Esophagus squamous epithelium (tissue), 5 donors: ENCODE measurements at regions of chr10 and their contacts with region 1.

Region 1: DNA sequence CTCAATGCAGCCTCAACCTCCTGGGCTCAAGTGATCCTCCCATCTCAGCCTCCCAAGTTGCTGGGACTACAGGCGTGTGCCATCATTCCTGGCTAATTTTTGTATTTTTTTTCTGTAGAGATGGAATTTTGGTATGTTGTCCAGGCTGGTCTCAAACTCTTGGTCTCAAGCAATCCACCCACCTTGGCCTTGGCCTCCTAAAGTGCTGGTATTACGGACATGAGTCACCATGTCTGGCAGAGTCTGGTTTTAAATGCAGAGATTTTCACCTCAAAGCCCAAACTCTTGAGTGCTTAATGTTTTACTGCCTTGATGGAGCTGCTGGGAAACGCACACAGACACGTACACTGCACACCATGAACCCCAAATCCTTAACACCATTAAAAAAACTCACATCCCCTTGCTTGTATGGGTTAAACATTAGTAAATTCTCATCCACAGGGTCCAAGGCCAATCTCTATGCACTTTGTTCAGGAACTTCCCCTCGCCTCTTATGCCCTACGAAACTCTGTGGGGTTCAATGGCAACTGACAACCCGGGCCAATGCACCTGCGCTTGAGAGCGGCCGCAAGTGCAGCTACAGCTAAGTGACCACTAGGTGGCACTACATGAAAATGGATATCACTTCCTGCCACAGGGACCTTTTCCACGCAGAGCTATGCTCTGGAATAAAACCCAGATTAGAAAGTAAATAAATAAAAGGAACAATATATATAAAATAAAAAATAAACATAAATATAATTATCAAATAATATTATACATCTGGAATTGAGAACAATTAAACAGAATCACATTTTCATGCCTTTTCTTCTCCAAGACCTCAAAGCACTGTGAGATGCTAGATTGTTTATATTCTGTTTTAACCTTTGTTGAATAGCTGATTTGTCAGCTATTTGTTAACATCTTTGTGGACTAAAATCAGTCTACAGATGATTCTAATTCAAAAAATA is 66.9 kb upstream of the AFAP1L2 start:
- DNase-seq: no peak
- H3K4me3 ChIP-seq: no peak overlapping the region
- H3K27ac ChIP-seq: peak overlapping the region in 2 of 4 donors; percentile 34 to 58
- H3K4me1 ChIP-seq: peaks cover 0 to 27% (median 0%) of the 10 kb centered on the region in 3 donors
- H3K27me3 ChIP-seq: no peaks in the 10 kb centered on the region
- CTCF ChIP-seq: peak; percentile 82 to 93 (median 89)
- POLR2A ChIP-seq: no peak

Region 2: DNA sequence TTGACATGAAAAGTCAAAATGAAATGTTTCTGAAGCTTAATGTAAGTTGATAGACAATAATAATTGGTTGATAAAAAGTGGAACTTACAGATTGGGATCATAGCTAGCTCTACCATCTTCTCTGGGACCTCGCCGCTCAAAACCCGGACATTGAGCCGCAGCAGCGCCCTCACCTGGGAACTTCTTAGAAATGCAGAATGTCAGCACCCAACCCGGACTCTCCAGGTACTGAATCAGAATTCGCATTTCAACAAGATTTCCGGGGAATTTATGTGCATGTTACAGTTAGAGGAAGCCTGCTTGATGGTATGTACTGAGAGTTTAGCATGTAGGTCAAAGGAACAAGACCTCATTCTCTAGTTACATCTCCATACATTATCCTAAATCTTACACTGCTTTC is 223.5 kb after region 1 on chr10:
- intact Hi-C with region 1: loop called (anchors 10 kb)
- DNase-seq: no peak
- H3K4me3 ChIP-seq: no peak overlapping the region
- H3K27ac ChIP-seq: no peak overlapping the region
- H3K4me1 ChIP-seq: peaks cover 0 to 34% (median 6%) of the 10 kb centered on the region in 3 donors
- H3K27me3 ChIP-seq: no peaks in the 10 kb centered on the region
- CTCF ChIP-seq: peak in 5 of 6 experiments; percentile 28 to 67 (median 37)
- POLR2A ChIP-seq: no peak

Region 3: GRCh38 chr10:114779803-114780609 is 308.8 kb after region 1 on chr10:
- intact Hi-C with region 1: loop called (anchors 5 kb)
- DNase-seq: no peak
- H3K4me3 ChIP-seq: no peak overlapping the region
- H3K27ac ChIP-seq: peak overlapping the region; percentile 31 to 69 (median 52)
- H3K4me1 ChIP-seq: peaks cover 5 to 23% (median 5%) of the 10 kb centered on the region in 3 donors
- H3K27me3 ChIP-seq: no peaks in the 10 kb centered on the region
- CTCF ChIP-seq: no peak
- POLR2A ChIP-seq: no peak